ENCODE measurements at regions of chr15 and their contacts with region 1.

Region 1: GRCh38 chr15:39580117-39580484 is 778 bp upstream of the THBS1 start:
- DNase-seq: peak; percentile 95
- H3K4me3 Mint-ChIP-seq: peak overlapping the region; percentile 78
- H3K27ac Mint-ChIP-seq: peak overlapping the region; percentile 24
- H3K4me1 Mint-ChIP-seq: peaks cover 38% of the 10 kb centered on the region
- H3K27me3 Mint-ChIP-seq: no peaks in the 10 kb centered on the region
- CTCF ChIP-seq: peak; percentile 96

Region 2: DNA sequence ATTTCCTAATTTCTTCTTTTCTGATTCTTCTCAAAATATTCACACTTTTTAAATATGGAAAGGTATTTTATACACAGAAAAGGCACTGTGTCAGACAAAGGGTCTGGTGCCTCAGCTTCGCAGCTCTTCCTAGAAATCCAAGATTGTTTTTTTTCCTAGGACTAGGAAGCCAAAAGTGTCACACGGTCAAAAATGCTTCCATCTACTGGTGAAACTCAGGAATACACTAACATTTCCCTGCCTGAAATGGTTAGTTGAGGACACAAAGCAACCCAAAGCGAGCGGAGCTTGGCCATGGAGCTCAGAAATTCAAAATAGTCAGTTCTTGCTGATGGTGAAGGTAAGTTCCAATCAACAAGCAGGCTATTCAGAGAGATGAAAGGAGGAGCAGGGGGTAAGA is 589.0 kb before region 1 on chr15:
- CTCF ChIA-PET with region 1: interaction called, 6 read pairs
- POLR2A ChIA-PET with region 1: no interaction called
- intact Hi-C with region 1: loop called (anchors 2 kb)
- DNase-seq: peak; percentile 52
- H3K4me3 Mint-ChIP-seq: no peak overlapping the region
- H3K27ac Mint-ChIP-seq: no peak overlapping the region
- H3K4me1 Mint-ChIP-seq: peaks cover 10% of the 10 kb centered on the region
- H3K27me3 Mint-ChIP-seq: no peaks in the 10 kb centered on the region
- CTCF ChIP-seq: peak; percentile 41

Region 3: DNA sequence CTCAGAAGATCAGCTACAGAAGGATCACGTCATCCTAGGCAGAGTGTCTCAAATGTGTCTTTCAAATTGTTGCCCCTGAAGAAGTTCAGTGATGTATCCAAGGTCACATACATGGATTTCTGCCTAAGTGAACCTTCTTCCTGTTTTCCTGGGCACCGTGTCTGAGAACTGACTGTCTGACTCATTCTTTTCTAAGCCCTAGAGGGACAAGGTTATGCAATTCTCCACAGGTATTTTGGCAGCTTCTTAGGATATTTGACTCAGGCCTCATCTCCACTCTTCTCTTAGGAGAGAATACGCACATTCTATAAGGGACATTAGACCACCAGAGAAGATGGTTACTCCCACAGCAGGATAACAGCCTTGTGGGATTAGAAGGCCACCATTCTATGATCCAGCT is 391.2 kb before region 1 on chr15:
- CTCF ChIA-PET with region 1: interaction called, 33 read pairs
- POLR2A ChIA-PET with region 1: interaction called, 19 read pairs
- intact Hi-C with region 1: no loop called
- DNase-seq: peak; percentile 97
- H3K4me3 Mint-ChIP-seq: peak overlapping the region; percentile 16
- H3K27ac Mint-ChIP-seq: peak overlapping the region; percentile 74
- H3K4me1 Mint-ChIP-seq: peaks cover 52% of the 10 kb centered on the region
- H3K27me3 Mint-ChIP-seq: no peaks in the 10 kb centered on the region
- CTCF ChIP-seq: no peak

Region 4: GRCh38 chr15:39391230-39391629 is 188.9 kb before region 1 on chr15:
- CTCF ChIA-PET with region 1: interaction called, 12 read pairs
- POLR2A ChIA-PET with region 1: interaction called, 12 read pairs
- intact Hi-C with region 1: no loop called
- DNase-seq: peak; percentile 100
- H3K4me3 Mint-ChIP-seq: no peak overlapping the region
- H3K27ac Mint-ChIP-seq: peak overlapping the region; percentile 12
- H3K4me1 Mint-ChIP-seq: peaks cover 27% of the 10 kb centered on the region
- H3K27me3 Mint-ChIP-seq: no peaks in the 10 kb centered on the region
- CTCF ChIP-seq: no peak

Region 5: DNA sequence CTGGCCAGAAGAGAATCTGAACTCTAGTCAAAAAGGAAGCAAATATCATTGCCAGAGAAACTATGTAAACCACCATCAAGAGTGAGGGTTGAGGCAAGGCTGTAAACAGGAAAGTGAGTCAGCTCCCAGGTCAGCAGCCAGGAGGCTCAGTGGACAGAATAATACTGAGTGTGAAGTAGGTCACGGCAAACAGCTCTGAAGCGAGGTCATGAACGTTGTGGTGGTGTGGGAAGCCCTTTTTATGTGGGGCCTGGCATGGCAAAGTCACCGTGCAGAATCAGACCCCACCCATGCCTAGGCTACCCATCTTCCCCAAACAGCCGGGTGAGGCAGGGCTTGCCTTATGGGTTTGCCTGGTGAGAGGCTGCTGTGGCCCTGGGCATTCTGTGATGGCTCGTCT is 44.7 kb after region 1 on chr15:
- CTCF ChIA-PET with region 1: interaction called, 48 read pairs
- POLR2A ChIA-PET with region 1: interaction called, 4 read pairs
- intact Hi-C with region 1: no loop called
- DNase-seq: peak; percentile 87
- H3K4me3 Mint-ChIP-seq: peak overlapping the region; percentile 11
- H3K27ac Mint-ChIP-seq: peak overlapping the region; percentile 99
- H3K4me1 Mint-ChIP-seq: peaks cover 32% of the 10 kb centered on the region
- H3K27me3 Mint-ChIP-seq: no peaks in the 10 kb centered on the region
- CTCF ChIP-seq: no peak